ENCODE measurements at regions of chr2 and their contacts with region 1.

Region 1: GRCh38 chr2:105576440-105577252 is 168.1 kb upstream of the NCK2 start:
- DNase-seq: peak in 4 of 5 donors; percentile 47 to 56 (median 52)
- H3K4me3 ChIP-seq: no peak overlapping the region
- H3K4me3 Mint-ChIP-seq: peak overlapping the region in 2 of 8 donors; percentile 0 to 27
- H3K27ac ChIP-seq: no peak overlapping the region
- H3K27ac Mint-ChIP-seq: peak overlapping the region; percentile 6 to 94 (median 91)
- H3K4me1 ChIP-seq: peaks cover 13% of the 10 kb centered on the region
- H3K4me1 Mint-ChIP-seq: peaks cover 9 to 29% (median 14%) of the 10 kb centered on the region in 4 donors
- H3K27me3 ChIP-seq: no peaks in the 10 kb centered on the region
- H3K27me3 Mint-ChIP-seq: peaks cover 7% of the 10 kb centered on the region in 2 donors

Region 2: DNA sequence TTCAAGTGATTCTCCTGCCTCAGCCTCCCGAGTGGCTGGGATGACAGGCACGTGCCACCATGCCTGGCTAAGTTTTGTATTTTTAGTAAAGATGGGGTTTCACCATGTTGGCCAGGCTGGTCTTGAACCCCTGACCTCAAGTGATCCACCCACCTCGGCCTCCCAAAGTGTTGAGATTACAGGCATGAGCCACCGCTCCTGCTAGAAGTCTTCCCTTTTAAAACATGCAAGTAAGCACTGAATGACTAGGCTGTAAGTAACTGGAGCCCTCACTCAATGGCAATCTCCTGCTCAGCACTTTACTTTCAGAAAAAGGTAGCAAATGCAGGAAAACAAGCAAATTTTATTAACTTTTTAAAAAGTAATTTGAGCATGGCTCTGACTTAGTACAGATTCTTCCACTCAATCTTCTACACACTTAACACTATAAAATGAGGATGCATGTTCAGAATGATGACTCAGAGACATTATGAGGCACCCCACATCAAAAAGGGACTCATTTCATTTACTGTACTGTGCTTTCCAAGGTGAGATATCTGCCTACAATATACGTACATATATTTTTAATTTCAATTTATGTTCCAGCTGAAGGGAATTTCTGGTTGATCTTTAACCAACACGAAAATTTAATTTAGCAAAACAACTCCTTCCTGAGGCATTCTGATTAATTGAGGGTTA is 161.5 kb after region 1 on chr2:
- CTCF ChIA-PET with region 1: interaction called, 7 read pairs
- POLR2A ChIA-PET with region 1: interaction called, 3 read pairs
- intact Hi-C with region 1: loop called (anchors 2 kb)
- DNase-seq: peak in 4 of 5 donors; percentile 64 to 73 (median 68)
- H3K4me3 ChIP-seq: peak overlapping the region; percentile 1 to 7
- H3K4me3 Mint-ChIP-seq: peak overlapping the region; percentile 64 to 86 (median 80)
- H3K27ac ChIP-seq: peak overlapping the region; percentile 77
- H3K27ac Mint-ChIP-seq: peak overlapping the region; percentile 93 to 98 (median 97)
- H3K4me1 ChIP-seq: peaks cover 94% of the 10 kb centered on the region
- H3K4me1 Mint-ChIP-seq: peaks cover 65 to 92% (median 76%) of the 10 kb centered on the region in 4 donors
- H3K27me3 ChIP-seq: no peaks in the 10 kb centered on the region
- H3K27me3 Mint-ChIP-seq: no peaks in the 10 kb centered on the region

Region 3: GRCh38 chr2:105749583-105750400 is 173.1 kb after region 1 on chr2:
- CTCF ChIA-PET with region 1: interaction called, 44 read pairs
- POLR2A ChIA-PET with region 1: no interaction called
- intact Hi-C with region 1: loop called (anchors 1 kb)
- DNase-seq: peak in 3 of 5 donors; percentile 32 to 63 (median 37)
- H3K4me3 ChIP-seq: peak overlapping the region; percentile 21 to 48
- H3K4me3 Mint-ChIP-seq: peak overlapping the region; percentile 88 to 99 (median 92)
- H3K27ac ChIP-seq: peak overlapping the region; percentile 78
- H3K27ac Mint-ChIP-seq: peak overlapping the region; percentile 92 to 99 (median 97)
- H3K4me1 ChIP-seq: peaks cover 81% of the 10 kb centered on the region
- H3K4me1 Mint-ChIP-seq: peaks cover 60 to 93% (median 75%) of the 10 kb centered on the region in 4 donors
- H3K27me3 ChIP-seq: no peaks in the 10 kb centered on the region
- H3K27me3 Mint-ChIP-seq: no peaks in the 10 kb centered on the region

Region 4: DNA sequence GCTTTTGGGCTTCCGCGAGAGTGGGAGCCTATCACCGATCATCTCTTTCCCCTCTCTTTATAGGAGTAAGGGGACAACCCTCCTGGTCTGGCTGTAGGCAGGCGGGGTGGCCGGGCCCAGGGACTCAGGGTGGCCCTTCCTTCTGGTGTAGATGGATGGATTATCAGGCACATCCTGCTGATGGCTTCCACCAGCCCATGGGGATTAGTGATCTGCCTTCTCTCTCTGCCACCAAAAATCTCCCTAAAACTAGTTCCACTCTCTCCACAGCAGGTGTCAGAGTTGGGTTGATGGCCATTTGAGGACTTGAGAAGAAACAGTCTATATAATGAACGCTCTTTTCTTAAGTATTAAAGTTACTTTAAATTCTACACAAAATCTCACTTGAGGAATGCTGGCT is 205.5 kb after region 1 on chr2:
- CTCF ChIA-PET with region 1: interaction called, 280 read pairs
- POLR2A ChIA-PET with region 1: interaction called, 17 read pairs
- intact Hi-C with region 1: no loop called
- DNase-seq: peak in 1 of 5 donors; percentile 48
- H3K4me3 ChIP-seq: no peak overlapping the region
- H3K4me3 Mint-ChIP-seq: peak overlapping the region; percentile 54 to 86 (median 75)
- H3K27ac ChIP-seq: peak overlapping the region; percentile 57
- H3K27ac Mint-ChIP-seq: peak overlapping the region; percentile 56 to 94 (median 86)
- H3K4me1 ChIP-seq: peaks cover 100% of the 10 kb centered on the region
- H3K4me1 Mint-ChIP-seq: peaks cover 81 to 98% (median 92%) of the 10 kb centered on the region in 4 donors
- H3K27me3 ChIP-seq: no peaks in the 10 kb centered on the region
- H3K27me3 Mint-ChIP-seq: no peaks in the 10 kb centered on the region

Region 5: GRCh38 chr2:105797298-105797819 is 220.7 kb after region 1 on chr2:
- CTCF ChIA-PET with region 1: interaction called, 280 read pairs
- POLR2A ChIA-PET with region 1: interaction called, 3 read pairs
- intact Hi-C with region 1: no loop called
- DNase-seq: peak in 4 of 5 donors; percentile 53 to 67 (median 58)
- H3K4me3 ChIP-seq: peak overlapping the region; percentile 1 to 33
- H3K4me3 Mint-ChIP-seq: peak overlapping the region; percentile 74 to 88 (median 82)
- H3K27ac ChIP-seq: peak overlapping the region; percentile 74
- H3K27ac Mint-ChIP-seq: peak overlapping the region; percentile 86 to 98 (median 95)
- H3K4me1 ChIP-seq: peaks cover 99% of the 10 kb centered on the region
- H3K4me1 Mint-ChIP-seq: peaks cover 82 to 95% (median 88%) of the 10 kb centered on the region in 4 donors
- H3K27me3 ChIP-seq: no peaks in the 10 kb centered on the region
- H3K27me3 Mint-ChIP-seq: no peaks in the 10 kb centered on the region

Region 6: DNA sequence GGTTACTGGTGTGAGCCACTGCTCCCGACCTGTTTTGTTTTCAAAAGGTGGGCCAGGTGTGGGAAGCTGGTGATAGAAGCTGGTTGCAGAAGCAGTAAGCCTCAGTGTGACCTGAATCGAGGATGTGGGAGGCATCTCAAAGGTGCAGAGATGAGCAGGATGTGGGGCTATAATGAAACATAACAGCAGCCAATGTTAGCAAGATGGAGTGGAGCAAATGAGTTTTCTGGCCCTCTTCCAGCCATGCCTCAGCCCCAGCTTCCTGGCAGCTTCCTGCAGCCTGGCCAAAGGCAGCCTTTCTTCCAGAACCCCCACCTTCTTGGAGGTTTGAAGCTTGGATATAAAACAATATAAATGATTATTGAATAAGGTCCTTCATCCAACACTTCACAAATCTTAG is 352.9 kb after region 1 on chr2:
- CTCF ChIA-PET with region 1: interaction called, 4 read pairs
- POLR2A ChIA-PET with region 1: no interaction called
- intact Hi-C with region 1: loop called (anchors 2 kb)
- DNase-seq: peak; percentile 62 to 72 (median 68)
- H3K4me3 ChIP-seq: no peak overlapping the region
- H3K4me3 Mint-ChIP-seq: peak overlapping the region; percentile 33 to 81 (median 63)
- H3K27ac ChIP-seq: no peak overlapping the region
- H3K27ac Mint-ChIP-seq: peak overlapping the region; percentile 73 to 97 (median 90)
- H3K4me1 ChIP-seq: peaks cover 89% of the 10 kb centered on the region
- H3K4me1 Mint-ChIP-seq: peaks cover 50 to 66% (median 65%) of the 10 kb centered on the region in 4 donors
- H3K27me3 ChIP-seq: no peaks in the 10 kb centered on the region
- H3K27me3 Mint-ChIP-seq: no peaks in the 10 kb centered on the region

Region 7: DNA sequence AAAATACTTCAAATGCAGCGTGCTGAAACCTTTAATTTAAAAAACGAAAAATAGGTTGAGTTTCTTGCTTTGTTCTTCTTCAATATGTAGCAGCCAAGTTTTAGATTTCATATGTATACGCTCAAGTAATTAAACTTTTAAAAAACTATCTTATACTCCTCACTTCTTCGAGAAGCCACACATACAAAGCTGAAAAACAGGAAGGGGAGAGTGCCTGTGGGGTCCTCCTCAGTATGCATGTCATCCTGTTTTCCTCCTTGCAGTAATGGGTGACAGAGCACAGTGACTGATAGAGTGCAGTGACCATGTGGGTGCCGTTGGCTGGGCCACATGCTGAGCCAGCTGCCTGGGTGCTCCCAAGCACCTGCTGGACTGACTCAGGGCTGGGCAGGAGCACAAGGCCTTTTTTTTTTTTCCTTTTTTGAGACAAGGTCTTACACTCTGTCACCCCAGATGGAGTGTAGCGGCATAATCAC is 584.2 kb after region 1 on chr2:
- CTCF ChIA-PET with region 1: no interaction called
- POLR2A ChIA-PET with region 1: no interaction called
- intact Hi-C with region 1: loop called (anchors 1 kb)
- DNase-seq: peak in 4 of 5 donors; percentile 56 to 70 (median 62)
- H3K4me3 ChIP-seq: peak overlapping the region in 1 of 2 donors; percentile 64
- H3K4me3 Mint-ChIP-seq: peak overlapping the region; percentile 87 to 98 (median 96)
- H3K27ac ChIP-seq: peak overlapping the region; percentile 80
- H3K27ac Mint-ChIP-seq: peak overlapping the region; percentile 91 to 99 (median 98)
- H3K4me1 ChIP-seq: peaks cover 87% of the 10 kb centered on the region
- H3K4me1 Mint-ChIP-seq: peaks cover 63 to 98% (median 79%) of the 10 kb centered on the region in 4 donors
- H3K27me3 ChIP-seq: no peaks in the 10 kb centered on the region
- H3K27me3 Mint-ChIP-seq: no peaks in the 10 kb centered on the region

Measured in CD4-positive, alpha-beta memory T cell (primary cell).